Activated CD4-positive, alpha-beta memory T cell treated with anti-CD3 and anti-CD28 coated beads for 36 hours (primary cell): ENCODE measurements at regions of chr1 and their contacts with region 1.

Region 1: GRCh38 chr1:221994274-221994698 is 252.4 kb upstream of the DUSP10 start:
- DNase-seq: peak; percentile 60
- H3K4me3 Mint-ChIP-seq: no peak overlapping the region
- H3K27ac Mint-ChIP-seq: peak overlapping the region; percentile 97
- H3K4me1 Mint-ChIP-seq: peaks cover 38% of the 10 kb centered on the region
- H3K27me3 Mint-ChIP-seq: peaks cover 2% of the 10 kb centered on the region

Region 2: DNA sequence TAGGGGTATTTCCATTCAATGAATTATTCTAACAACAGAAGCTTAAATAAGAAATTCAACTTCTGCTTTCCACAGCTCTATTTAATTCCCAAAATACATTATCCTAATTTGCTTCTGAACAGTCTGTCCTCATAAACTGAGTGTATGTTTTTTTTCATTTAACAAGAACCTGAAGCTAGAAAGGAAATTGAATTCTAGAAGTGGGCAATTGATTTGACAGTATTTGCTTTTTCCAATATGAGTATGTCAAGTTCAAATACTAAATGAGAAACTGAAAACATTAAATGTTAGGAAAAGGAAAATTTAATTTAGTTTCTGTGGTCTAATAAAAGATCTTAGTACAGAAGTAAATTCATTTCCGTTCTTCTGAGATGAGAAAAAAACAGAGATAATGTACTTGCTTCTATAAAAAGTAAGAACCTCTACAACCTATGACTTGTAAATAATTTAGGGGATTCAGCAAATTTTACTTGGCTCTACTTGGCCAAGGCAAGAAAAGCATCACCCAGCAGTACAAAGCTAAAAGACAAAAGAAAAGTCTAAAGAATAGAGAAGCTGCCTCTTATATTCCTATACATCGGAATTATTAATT is 1753.1 kb before region 1 on chr1:
- CTCF ChIA-PET with region 1: no interaction called
- POLR2A ChIA-PET with region 1: no interaction called
- intact Hi-C with region 1: loop called (anchors 5 kb)
- DNase-seq: no peak
- H3K4me3 Mint-ChIP-seq: no peak overlapping the region
- H3K27ac Mint-ChIP-seq: no peak overlapping the region
- H3K4me1 Mint-ChIP-seq: peaks cover 40% of the 10 kb centered on the region
- H3K27me3 Mint-ChIP-seq: no peaks in the 10 kb centered on the region

Region 3: DNA sequence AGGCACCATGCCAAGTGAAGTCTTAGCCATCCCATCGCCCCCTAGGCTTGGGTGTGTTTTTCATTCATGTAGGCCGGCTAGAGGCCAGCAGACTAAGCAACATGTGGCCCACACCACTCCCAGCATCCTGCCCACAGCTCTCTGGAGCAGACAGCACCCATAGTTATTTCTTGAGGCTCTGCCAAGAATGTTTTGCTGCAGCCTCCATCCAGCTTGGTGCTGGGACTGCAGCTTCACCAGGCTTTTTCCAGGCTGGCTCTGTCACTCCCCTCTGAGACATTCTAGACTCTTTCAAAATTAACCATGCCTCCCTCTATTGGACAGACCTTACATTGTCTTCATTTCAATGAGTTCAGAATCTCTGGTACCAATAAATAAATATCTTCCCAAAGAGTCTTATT is 356.6 kb before region 1 on chr1:
- CTCF ChIA-PET with region 1: no interaction called
- POLR2A ChIA-PET with region 1: no interaction called
- intact Hi-C with region 1: no loop called
- DNase-seq: no peak
- H3K4me3 Mint-ChIP-seq: no peak overlapping the region
- H3K27ac Mint-ChIP-seq: no peak overlapping the region
- H3K4me1 Mint-ChIP-seq: no peaks in the 10 kb centered on the region
- H3K27me3 Mint-ChIP-seq: no peaks in the 10 kb centered on the region

Region 4: DNA sequence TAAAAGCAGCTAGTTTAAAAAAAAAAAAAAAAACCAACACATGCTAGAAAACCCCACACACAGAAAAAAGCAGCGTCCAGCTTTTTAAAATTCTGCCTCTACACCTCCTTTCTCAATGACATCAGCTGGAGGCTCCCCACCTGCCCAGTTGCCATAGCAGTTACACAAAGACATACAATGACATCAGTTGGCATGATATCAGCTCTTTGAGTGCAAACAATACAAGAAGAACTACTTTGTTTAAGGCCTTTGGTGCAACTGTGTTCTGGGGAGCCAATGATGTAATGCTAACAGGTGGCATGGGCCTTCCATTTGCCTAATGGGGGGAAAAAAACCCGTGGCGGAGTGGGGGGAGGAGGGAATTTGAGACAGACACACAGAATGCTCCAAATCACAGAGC is 285.3 kb before region 1 on chr1:
- CTCF ChIA-PET with region 1: no interaction called
- POLR2A ChIA-PET with region 1: no interaction called
- intact Hi-C with region 1: loop called (anchors 1 kb)
- DNase-seq: peak; percentile 63
- H3K4me3 Mint-ChIP-seq: peak overlapping the region; percentile 26
- H3K27ac Mint-ChIP-seq: peak overlapping the region; percentile 86
- H3K4me1 Mint-ChIP-seq: peaks cover 60% of the 10 kb centered on the region
- H3K27me3 Mint-ChIP-seq: no peaks in the 10 kb centered on the region

Region 5: GRCh38 chr1:221777431-221778072 is 216.7 kb before region 1 on chr1:
- CTCF ChIA-PET with region 1: no interaction called
- POLR2A ChIA-PET with region 1: no interaction called
- intact Hi-C with region 1: loop called (anchors 1 kb)
- DNase-seq: peak; percentile 73
- H3K4me3 Mint-ChIP-seq: peak overlapping the region; percentile 38
- H3K27ac Mint-ChIP-seq: peak overlapping the region; percentile 79
- H3K4me1 Mint-ChIP-seq: peaks cover 71% of the 10 kb centered on the region
- H3K27me3 Mint-ChIP-seq: no peaks in the 10 kb centered on the region

Region 6: GRCh38 chr1:221839796-221840395 is 154.4 kb before region 1 on chr1:
- CTCF ChIA-PET with region 1: no interaction called
- POLR2A ChIA-PET with region 1: no interaction called
- intact Hi-C with region 1: loop called (anchors 2 kb)
- DNase-seq: peak; percentile 88
- H3K4me3 Mint-ChIP-seq: no peak overlapping the region
- H3K27ac Mint-ChIP-seq: peak overlapping the region; percentile 74
- H3K4me1 Mint-ChIP-seq: peaks cover 38% of the 10 kb centered on the region
- H3K27me3 Mint-ChIP-seq: peaks cover 6% of the 10 kb centered on the region

Region 7: DNA sequence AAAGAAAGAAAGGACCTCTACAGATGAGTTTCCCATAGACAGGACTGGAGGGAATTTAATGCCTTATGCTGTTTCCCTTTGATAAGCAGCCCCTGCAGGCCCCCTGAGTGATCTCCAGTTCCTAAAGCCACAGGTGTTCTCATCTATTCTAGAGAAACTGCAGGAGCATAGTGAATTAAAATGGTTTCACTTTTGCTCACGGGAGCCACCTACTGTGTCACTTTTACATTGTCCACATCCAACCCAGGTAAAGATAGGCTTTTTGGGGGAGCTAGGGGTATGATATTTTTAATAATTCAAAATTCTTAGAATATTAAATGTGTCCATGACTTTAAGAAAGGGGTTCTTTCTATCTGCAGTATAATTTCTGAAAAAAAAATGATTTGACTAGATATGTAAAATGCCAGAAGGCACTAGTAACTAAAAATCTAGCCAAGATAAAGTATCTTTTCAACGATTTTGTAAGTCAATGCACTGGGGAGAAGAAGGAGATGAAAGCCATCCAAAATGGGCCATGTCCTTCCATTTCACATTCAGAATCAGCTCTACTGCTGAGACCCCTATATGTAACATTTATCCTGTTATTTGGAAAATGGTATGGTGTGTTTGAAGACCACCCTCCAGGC is 14.9 kb after region 1 on chr1:
- CTCF ChIA-PET with region 1: interaction called, 4 read pairs
- POLR2A ChIA-PET with region 1: no interaction called
- intact Hi-C with region 1: loop called (anchors 2 kb)
- DNase-seq: peak; percentile 27
- H3K4me3 Mint-ChIP-seq: no peak overlapping the region
- H3K27ac Mint-ChIP-seq: no peak overlapping the region
- H3K4me1 Mint-ChIP-seq: no peaks in the 10 kb centered on the region
- H3K27me3 Mint-ChIP-seq: no peaks in the 10 kb centered on the region

Region 8: DNA sequence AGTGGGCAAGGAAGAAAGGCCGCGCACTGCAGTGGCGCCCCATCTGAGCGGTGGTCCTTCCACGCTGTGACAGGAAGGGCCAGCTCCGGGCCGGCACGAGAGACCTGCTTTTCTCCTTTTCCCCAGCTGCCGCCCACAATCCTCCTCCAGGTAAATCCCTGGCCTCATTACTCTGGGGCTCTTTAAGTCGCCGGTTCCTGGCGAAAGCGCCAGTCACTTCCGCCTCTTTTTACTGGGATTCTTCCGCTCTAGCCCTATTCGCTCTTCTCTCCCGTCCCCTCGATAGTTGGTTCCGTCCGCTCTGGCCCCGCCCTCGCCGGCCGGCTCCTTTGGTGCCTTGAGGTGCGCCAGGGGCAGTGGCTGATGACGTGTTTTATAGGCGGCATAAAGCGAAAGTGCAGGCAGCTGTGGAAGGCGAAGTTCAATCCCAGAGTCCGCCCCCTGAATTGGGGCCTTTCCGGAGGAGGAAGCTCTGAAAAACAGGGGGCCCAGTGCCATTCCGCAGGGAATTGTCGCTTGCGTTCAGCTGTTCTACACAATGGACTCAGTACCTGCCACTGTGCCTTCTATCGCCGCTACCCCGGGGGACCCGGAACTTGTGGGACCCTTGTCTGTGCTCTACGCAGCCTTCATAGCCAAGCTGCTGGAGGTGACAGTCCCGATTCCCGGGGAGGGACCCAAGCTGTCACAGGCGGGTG is 649.8 kb after region 1 on chr1:
- CTCF ChIA-PET with region 1: no interaction called
- POLR2A ChIA-PET with region 1: no interaction called
- intact Hi-C with region 1: loop called (anchors 10 kb)
- DNase-seq: peak; percentile 99
- H3K4me3 Mint-ChIP-seq: peak overlapping the region; percentile 99
- H3K27ac Mint-ChIP-seq: peak overlapping the region; percentile 94
- H3K4me1 Mint-ChIP-seq: peaks cover 22% of the 10 kb centered on the region
- H3K27me3 Mint-ChIP-seq: no peaks in the 10 kb centered on the region